Posterior vena cava (tissue), 2 donors: ENCODE measurements at regions of chr3 and their contacts with region 1.

Region 1: GRCh38 chr3:65112751-65113300 is 425.0 kb upstream of the ADAMTS9 start:
- DNase-seq: no peak

Region 2: DNA sequence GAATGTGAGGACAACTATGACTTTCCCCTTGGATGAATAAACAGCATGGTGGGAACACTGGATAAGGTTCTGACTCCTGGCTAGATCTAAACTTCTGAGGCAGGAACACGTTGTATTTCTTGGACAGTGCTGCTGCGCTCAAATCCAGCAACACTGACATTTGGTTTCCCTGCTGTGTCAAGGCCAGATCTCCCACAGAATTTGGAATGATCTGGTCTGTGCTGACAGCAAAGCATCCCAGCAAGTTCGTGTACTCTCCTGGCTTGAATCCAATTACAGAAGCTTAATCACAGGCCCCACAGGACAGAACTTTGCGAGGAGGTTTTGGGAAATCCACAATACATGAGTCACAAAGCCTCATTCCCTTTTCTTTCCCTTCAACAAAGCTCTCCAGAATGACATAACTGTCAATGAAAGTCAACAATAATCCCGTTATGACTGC is 517.6 kb before region 1 on chr3:
- intact Hi-C with region 1: no loop called
- DNase-seq: peak; percentile 80

Region 3: GRCh38 chr3:64717872-64718613 is 394.8 kb before region 1 on chr3:
- intact Hi-C with region 1: no loop called
- DNase-seq: no peak

Region 4: GRCh38 chr3:65398953-65399352 is 286.1 kb after region 1 on chr3:
- intact Hi-C with region 1: loop called in 1 of 2 experiments (anchors 10 kb)
- DNase-seq: no peak